ENCODE measurements at regions of chr2 and their contacts with region 1.

Region 1: DNA sequence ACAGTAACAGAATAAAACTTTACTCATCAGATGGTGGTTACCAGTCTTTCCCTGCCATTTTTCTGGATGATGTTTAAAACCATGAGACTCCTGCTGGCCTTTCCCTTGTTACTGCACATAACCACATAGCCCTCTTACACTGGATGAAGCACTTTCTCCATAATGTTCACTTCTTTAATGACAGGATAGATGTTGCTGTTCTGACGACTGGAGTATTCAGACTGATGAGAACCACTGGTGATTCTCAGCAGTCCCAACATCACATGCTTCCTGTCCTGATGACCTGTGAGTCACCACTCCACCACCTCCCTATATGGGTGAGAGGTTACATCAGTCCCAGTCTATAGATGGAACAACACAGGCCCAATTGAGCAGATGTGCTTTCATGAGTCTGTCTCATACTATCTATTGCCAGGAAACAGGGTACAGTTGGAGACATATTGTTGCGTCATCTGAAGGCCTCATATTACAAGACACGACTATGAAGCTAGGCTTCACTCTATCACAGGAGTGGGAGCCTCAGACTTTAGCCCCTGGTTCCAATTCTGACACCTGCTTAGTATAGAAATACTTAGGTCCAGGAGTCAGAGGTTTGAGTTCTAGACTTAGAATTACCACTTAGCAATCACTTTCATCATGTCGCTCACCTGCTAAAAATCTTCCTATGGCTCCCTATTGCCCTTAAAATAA is 145.7 kb upstream of the KLF7 start:
- DNase-seq: no peak
- ATAC-seq: peak; percentile 40
- H3K4me3 Mint-ChIP-seq: no peak overlapping the region
- H3K27ac Mint-ChIP-seq: no peak overlapping the region
- H3K4me1 Mint-ChIP-seq: peaks cover 3% of the 10 kb centered on the region
- H3K27me3 Mint-ChIP-seq: no peaks in the 10 kb centered on the region
- CTCF ChIP-seq: no peak

Region 2: GRCh38 chr2:207296265-207296948 is 15.1 kb before region 1 on chr2:
- CTCF ChIA-PET with region 1: no interaction called
- POLR2A ChIA-PET with region 1: no interaction called
- intact Hi-C with region 1: no loop called
- DNase-seq: no peak
- ATAC-seq: no peak
- H3K4me3 Mint-ChIP-seq: no peak overlapping the region
- H3K27ac Mint-ChIP-seq: no peak overlapping the region
- H3K4me1 Mint-ChIP-seq: peaks cover under 1% of the 10 kb centered on the region
- H3K27me3 Mint-ChIP-seq: no peaks in the 10 kb centered on the region
- CTCF ChIP-seq: no peak

Region 3: GRCh38 chr2:207330912-207331311 is 19.5 kb after region 1 on chr2:
- CTCF ChIA-PET with region 1: no interaction called
- POLR2A ChIA-PET with region 1: no interaction called
- intact Hi-C with region 1: loop called (anchors 2 kb)
- DNase-seq: no peak
- ATAC-seq: peak; percentile 61
- H3K4me3 Mint-ChIP-seq: peak overlapping the region; percentile 4
- H3K27ac Mint-ChIP-seq: peak overlapping the region; percentile 68
- H3K4me1 Mint-ChIP-seq: peaks cover 53% of the 10 kb centered on the region
- H3K27me3 Mint-ChIP-seq: no peaks in the 10 kb centered on the region
- CTCF ChIP-seq: no peak

Region 4: DNA sequence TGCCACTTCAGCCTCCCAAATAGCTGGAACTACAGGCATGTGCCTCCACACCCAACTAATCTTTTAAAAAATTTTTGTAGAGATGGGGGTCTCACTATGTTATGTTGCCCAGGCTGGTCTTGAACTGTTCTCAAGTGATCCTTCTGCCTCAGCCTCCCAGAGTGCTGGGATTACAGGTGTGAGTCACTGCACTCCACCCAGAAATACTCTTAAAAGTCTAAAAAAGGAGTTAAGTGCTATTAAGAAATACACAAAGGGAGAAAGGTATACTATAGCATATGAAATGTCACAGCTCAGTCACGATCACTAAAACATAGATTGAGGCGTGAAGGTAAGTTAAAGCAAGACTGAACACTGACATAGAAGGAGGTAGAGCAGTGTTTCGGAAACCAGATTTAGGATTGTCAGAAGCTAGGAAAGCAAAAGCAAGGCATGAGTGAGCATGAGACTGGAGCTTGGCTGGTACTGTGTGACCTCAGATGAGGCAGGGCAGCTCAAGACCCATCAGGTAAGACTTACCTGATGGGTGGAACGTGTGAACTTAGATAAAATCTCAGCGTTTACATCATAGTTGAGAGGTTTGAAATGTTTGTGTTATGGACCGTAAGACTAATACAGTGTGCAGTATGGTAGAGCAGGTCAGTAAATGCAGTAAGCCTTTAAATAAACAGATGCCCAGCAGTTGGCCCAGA is 409.2 kb after region 1 on chr2:
- CTCF ChIA-PET with region 1: no interaction called
- POLR2A ChIA-PET with region 1: no interaction called
- intact Hi-C with region 1: no loop called
- DNase-seq: no peak
- ATAC-seq: no peak
- H3K4me3 Mint-ChIP-seq: no peak overlapping the region
- H3K27ac Mint-ChIP-seq: no peak overlapping the region
- H3K4me1 Mint-ChIP-seq: peaks cover 27% of the 10 kb centered on the region
- H3K27me3 Mint-ChIP-seq: no peaks in the 10 kb centered on the region
- CTCF ChIP-seq: no peak

Measured in activated B cell treated with CpG ODN at 0.5 μM for 24 hours (primary cell).